PC-3 (cell line): ENCODE measurements at regions of chr17 and their contacts with region 1.

Region 1: DNA sequence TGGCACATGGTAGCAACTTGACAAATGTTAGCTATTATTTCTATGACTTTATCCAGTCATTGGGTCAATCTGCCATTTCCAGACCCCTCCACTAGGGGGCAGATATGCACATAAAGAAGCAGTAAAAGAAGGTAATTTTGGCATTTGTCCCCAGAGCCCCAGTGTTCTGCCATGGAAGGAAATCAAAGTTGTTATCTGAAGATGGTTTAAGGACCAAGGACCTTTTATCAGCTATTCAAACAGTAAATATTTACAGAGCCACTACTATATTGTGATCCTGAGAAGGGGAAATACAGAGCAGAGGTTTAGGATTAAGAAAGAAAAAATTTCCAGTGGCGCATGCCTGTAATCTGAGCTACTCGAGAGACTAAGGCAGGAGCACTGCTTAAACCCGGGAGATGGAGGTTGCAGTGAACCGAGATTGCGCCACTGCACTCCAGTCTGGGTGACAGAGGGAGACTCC is 20.0 kb downstream of the TRAF4 start:
- DNase-seq: peak; percentile 85
- ATAC-seq: no peak; the same call in 1 of the 2 replicates
- H3K4me3 ChIP-seq: no peak overlapping the region
- H3K27ac ChIP-seq: no peak overlapping the region
- H3K4me1 ChIP-seq: peaks cover 14% of the 10 kb centered on the region
- H3K27me3 ChIP-seq: no peaks in the 10 kb centered on the region
- CTCF ChIP-seq: peak; percentile 86

Region 2: DNA sequence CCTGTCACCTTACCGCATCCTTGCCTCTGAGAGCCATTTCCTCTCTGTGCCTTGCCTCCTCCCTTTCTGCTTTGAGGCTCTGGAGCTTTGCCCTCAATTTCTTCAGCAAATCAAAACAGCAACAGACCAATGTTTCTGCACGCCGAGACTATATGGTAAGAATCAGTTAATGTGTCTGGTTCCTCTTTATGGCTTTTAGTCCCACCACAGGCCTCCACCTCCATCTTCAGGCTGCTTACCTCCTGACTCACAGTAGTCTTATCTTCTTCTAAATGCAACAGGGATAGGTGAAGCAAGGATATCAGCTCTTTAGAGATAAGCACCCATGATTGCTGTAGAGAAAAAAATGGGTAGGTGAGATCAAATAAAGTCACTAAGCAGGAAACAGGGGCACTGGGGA is 178.0 kb before region 1 on chr17:
- CTCF ChIA-PET with region 1: no interaction called
- POLR2A ChIA-PET with region 1: no interaction called
- intact Hi-C with region 1: no loop called
- DNase-seq: no peak
- ATAC-seq: no peak
- H3K4me3 ChIP-seq: no peak overlapping the region
- H3K27ac ChIP-seq: no peak overlapping the region
- H3K4me1 ChIP-seq: no peaks in the 10 kb centered on the region
- H3K27me3 ChIP-seq: no peaks in the 10 kb centered on the region
- CTCF ChIP-seq: no peak

Region 3: GRCh38 chr17:28812748-28813377 is 49.0 kb after region 1 on chr17:
- CTCF ChIA-PET with region 1: no interaction called
- POLR2A ChIA-PET with region 1: no interaction called
- intact Hi-C with region 1: loop called (anchors 5 kb)
- DNase-seq: no peak
- ATAC-seq: peak; percentile 9
- H3K4me3 ChIP-seq: peak overlapping the region; percentile 79
- H3K27ac ChIP-seq: peak overlapping the region; percentile 86
- H3K4me1 ChIP-seq: peaks cover 34% of the 10 kb centered on the region
- H3K27me3 ChIP-seq: no peaks in the 10 kb centered on the region
- CTCF ChIP-seq: no peak

Region 4: DNA sequence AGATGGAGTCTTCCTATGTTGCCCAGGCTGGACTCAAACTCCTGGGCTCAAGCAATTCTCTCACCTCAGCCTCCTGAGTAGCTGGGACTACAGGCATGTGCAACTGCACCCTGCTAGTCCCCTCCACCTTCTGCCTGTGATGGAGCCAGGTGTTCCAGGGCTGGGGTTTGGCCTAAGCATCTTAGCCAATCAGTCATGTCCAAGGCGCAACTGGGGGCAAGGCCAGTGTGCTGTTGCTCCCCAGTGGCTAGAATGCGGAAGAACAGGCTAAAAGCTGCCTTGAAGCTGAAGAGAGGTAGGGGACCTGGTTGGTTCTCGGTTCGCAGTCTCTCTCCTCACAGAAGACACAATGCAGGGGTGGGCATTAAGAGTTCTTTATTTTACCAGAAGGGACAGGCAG is 115.1 kb after region 1 on chr17:
- CTCF ChIA-PET with region 1: interaction called, 12 read pairs
- POLR2A ChIA-PET with region 1: no interaction called
- intact Hi-C with region 1: no loop called
- DNase-seq: peak; percentile 52
- ATAC-seq: peak; percentile 61
- H3K4me3 ChIP-seq: no peak overlapping the region
- H3K27ac ChIP-seq: no peak overlapping the region
- H3K4me1 ChIP-seq: 0 out of 2 replicates have a peak, but pooled peaks cover 4% of the 10 kb centered on the region
- H3K27me3 ChIP-seq: no peaks in the 10 kb centered on the region
- CTCF ChIP-seq: peak; percentile 55; the same call in 1 of the 2 replicates